Activated CD8-positive, alpha-beta T cell treated with anti-CD3 and anti-CD28 coated beads, Interleukin-2, amount 10 ng/mL, durations not matched to agents 7 days and 5 days (primary cell): ENCODE measurements at regions of chr20 and their contacts with region 1.

Region 1: DNA sequence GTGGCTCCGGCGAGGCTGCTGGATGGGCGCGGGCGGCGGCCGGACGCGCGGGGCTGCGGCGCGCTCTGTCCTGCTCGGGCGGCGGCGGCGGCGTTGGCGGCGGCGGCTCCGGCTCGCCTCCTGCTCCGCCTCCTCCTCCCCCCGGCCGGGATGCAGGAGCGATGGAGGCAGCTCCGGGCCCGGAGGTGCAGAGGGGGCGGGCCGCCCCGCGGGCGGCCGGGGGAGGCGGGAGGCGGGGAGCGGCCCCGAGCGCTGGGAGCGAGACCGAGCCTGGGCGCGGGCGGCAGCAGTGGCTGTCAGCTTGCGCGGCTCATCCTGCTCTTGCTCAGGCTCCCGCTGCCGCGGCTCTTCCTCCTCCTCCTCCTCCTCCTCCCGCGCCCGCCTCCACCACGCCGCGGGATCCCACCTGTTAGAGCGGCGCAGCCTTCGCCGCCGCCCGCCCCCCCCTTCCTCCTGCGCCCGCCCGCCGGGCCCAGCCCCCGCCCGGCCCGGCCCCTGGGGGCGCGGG is at the start of gene NOL4L:
- DNase-seq: peak; percentile 53
- ATAC-seq: peak; percentile 45
- H3K4me3 Mint-ChIP-seq: peak within 1 kb of the TSS; percentile 81
- H3K27ac Mint-ChIP-seq: peak within 1 kb of the TSS; percentile 74
- H3K4me1 Mint-ChIP-seq: peaks cover 46% of the 10 kb centered on the region
- H3K27me3 Mint-ChIP-seq: peaks cover 22% of the 10 kb centered on the region
- total RNA-seq, gene NOL4L: 22.2 to 24.5 TPM

Region 2: GRCh38 chr20:32521780-32522525 is 63.1 kb before region 1 on chr20:
- CTCF ChIA-PET with region 1: interaction called, 12 read pairs
- POLR2A ChIA-PET with region 1: interaction called, 3 read pairs
- DNase-seq: peak; percentile 71
- ATAC-seq: peak; percentile 79
- H3K4me3 Mint-ChIP-seq: no peak overlapping the region
- H3K27ac Mint-ChIP-seq: peak overlapping the region; percentile 80
- H3K4me1 Mint-ChIP-seq: peaks cover 56% of the 10 kb centered on the region
- H3K27me3 Mint-ChIP-seq: no peaks in the 10 kb centered on the region